Right ventricle myocardium inferior (tissue), 1 donor: ENCODE measurements at regions of chr6 and their contacts with region 1.

Region 1: DNA sequence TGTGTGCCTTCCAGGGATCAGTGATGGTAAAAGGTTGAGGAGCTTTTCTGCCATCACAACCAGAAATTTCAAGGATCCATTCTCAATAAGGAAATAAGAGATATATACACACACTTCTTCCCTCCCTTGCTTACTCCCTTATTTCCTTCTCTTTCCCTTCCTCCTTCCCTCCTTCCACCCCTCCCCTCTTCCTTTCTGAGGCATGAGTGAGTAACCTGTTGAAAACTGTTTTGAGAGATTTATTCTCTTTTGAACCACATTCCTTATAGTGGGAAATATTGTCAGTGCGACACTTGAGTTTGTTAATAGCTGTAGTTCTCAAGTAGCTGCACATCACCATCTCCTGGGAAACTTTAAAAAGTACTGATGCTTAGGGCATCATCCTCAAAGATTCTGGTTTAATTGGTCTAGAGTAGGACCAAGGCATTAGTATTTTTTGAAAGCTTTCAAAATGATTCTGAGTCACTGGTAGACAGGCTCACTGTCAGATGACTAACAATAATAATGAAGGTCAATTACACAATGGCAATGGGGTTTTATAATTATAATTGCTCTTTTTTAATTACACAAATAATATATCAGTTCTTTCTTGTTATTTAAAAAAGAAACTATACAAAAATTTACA is 109.9 kb downstream of the POPDC3 start:
- DNase-seq: no peak
- ATAC-seq: no peak

Region 2: DNA sequence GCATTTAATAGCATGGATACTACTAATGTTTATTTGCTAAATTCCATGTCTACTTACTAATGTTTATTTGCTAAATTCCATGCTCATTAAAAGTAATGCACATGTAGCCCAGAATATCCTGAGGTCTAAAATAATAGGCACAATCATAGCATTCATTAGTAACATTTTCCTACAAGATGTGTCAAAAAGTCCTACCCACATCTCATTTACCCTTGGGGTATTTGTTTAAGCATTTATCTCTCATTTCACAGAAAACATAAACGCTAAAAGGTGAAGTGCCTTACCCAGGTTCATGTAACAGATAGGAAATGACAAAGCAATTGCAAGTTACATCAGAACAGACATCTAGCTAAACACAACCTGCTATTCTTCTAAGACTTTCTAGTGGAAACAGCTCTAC is 667.4 kb before region 1 on chr6:
- intact Hi-C with region 1: no loop called
- DNase-seq: no peak
- ATAC-seq: no peak

Region 3: DNA sequence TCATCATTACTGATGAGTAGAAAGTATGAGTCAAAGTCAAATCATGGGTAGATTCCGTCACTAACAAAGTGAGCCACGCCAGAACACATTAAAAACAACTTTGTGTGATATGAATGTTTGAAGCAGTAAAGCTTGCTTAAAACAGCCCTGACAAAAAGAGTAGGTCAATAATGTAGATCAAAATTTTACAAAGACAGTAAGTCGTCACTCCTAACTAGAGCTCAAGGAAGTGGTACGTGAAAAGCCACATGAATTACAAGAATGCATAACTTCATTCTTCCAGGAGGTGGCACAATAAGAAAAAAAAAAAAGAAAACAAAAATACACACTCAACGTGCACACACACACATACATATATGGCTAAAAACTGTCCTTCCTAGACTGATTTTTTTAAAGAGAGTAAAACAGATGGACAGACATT is 280.2 kb before region 1 on chr6:
- intact Hi-C with region 1: loop called (anchors 5 kb)
- DNase-seq: no peak
- ATAC-seq: no peak